Activated T-helper 1 cell treated with anti-CD3 and anti-CD28 coated beads, Interleukin-12 subunit alpha, Interleukin-12 subunit beta, Interleukin-2, Interleukin-4 antibody, amounts not matched to agents 30 ng/mL and 10 ng/mL and 1 ng/mL, durations not matched to agents 14 hours and 24 hours and 36 hours (primary cell): ENCODE measurements at regions of chr11 and their contacts with region 1.

Region 1: GRCh38 chr11:96242971-96243647 is 99.9 kb downstream of the MAML2 start:
- DNase-seq: peak; percentile 78
- H3K4me3 Mint-ChIP-seq: peak overlapping the region; percentile 79
- H3K27ac Mint-ChIP-seq: peak overlapping the region; percentile 94
- H3K4me1 Mint-ChIP-seq: peaks cover 46% of the 10 kb centered on the region
- H3K27me3 Mint-ChIP-seq: no peaks in the 10 kb centered on the region

Region 2: GRCh38 chr11:95835768-95836488 is 407.2 kb before region 1 on chr11:
- intact Hi-C with region 1: loop called (anchors 10 kb)
- DNase-seq: peak; percentile 29
- H3K4me3 Mint-ChIP-seq: no peak overlapping the region
- H3K27ac Mint-ChIP-seq: peak overlapping the region; percentile 0
- H3K4me1 Mint-ChIP-seq: no peaks in the 10 kb centered on the region
- H3K27me3 Mint-ChIP-seq: no peaks in the 10 kb centered on the region

Region 3: DNA sequence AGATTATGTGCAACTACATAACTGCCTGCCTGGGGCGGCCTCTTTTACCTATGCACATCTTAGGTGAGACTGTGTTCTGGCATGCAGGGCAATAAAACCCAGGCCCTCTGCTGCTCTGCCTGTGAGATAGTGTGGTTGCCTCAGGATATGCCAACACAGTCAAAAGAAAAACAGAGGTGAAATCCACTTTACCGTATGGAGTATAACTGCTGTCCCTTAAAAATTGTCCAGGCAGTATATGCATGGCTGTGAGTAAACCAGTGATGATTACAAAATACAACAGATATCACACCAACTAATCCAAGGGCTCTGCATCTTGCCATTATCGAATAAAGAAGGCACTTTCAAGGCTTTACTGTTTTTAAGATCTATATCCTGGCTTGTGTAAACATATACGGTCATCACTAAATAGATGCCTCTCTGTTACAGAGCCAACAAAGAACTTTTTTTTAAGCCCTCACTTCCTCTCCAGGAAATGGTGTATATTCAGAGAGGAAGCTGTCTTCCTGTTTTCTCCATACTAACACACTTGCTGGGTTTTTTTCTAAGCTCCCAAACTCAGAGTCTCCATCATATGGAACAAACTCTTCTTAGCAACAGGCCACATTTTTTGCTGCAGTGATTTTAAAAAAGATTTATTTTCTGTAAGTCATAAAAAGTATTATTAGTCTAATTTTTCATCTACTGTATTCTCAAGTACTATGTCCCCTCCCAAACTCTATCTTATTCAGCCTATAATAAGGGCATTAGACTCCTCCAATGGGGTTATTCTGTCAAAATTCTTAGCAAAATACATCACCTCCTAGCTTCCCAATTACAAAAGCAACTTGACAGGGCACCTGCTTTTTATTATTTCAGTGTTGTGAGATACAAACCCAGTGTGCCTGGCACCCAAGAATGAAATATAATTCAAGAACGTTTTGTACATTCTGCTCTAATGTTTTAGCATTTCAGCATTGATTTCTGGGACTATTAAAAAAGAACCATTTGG is 35.4 kb before region 1 on chr11:
- intact Hi-C with region 1: loop called (anchors 1 kb)
- DNase-seq: no peak
- H3K4me3 Mint-ChIP-seq: peak overlapping the region; percentile 72
- H3K27ac Mint-ChIP-seq: peak overlapping the region; percentile 95
- H3K4me1 Mint-ChIP-seq: peaks cover 83% of the 10 kb centered on the region
- H3K27me3 Mint-ChIP-seq: no peaks in the 10 kb centered on the region

Region 4: DNA sequence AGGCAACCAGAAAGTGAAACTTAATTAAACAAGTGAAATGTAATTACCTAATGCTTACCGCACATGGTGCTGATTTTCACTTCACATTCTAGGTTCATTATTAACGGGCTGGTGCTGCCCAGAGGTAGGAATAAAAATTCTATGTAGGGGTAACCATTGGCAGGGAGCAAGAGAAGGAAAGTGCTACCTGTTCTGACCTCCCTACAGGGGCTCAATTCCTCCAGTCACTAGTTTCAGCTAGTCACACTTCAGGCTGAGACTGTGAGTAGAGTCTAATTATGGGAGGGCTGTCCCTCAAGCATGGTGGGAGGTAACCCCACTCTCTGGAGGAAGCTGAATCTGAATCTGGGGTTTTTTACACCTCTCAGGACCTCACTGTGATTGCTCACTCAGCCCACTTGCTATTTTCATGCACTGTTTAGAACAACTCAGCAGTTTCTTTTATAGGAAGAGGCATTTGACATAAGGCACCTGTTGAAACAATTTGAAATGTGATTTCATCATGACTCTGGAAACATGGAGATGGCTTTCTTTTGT is 24.5 kb after region 1 on chr11:
- intact Hi-C with region 1: loop called (anchors 1 kb)
- DNase-seq: no peak
- H3K4me3 Mint-ChIP-seq: peak overlapping the region; percentile 43
- H3K27ac Mint-ChIP-seq: peak overlapping the region; percentile 57
- H3K4me1 Mint-ChIP-seq: peaks cover 78% of the 10 kb centered on the region
- H3K27me3 Mint-ChIP-seq: no peaks in the 10 kb centered on the region

Region 5: GRCh38 chr11:96284917-96285316 is 41.8 kb after region 1 on chr11:
- intact Hi-C with region 1: no loop called
- DNase-seq: no peak
- H3K4me3 Mint-ChIP-seq: no peak overlapping the region
- H3K27ac Mint-ChIP-seq: no peak overlapping the region
- H3K4me1 Mint-ChIP-seq: peaks cover 50% of the 10 kb centered on the region
- H3K27me3 Mint-ChIP-seq: no peaks in the 10 kb centered on the region

Region 6: DNA sequence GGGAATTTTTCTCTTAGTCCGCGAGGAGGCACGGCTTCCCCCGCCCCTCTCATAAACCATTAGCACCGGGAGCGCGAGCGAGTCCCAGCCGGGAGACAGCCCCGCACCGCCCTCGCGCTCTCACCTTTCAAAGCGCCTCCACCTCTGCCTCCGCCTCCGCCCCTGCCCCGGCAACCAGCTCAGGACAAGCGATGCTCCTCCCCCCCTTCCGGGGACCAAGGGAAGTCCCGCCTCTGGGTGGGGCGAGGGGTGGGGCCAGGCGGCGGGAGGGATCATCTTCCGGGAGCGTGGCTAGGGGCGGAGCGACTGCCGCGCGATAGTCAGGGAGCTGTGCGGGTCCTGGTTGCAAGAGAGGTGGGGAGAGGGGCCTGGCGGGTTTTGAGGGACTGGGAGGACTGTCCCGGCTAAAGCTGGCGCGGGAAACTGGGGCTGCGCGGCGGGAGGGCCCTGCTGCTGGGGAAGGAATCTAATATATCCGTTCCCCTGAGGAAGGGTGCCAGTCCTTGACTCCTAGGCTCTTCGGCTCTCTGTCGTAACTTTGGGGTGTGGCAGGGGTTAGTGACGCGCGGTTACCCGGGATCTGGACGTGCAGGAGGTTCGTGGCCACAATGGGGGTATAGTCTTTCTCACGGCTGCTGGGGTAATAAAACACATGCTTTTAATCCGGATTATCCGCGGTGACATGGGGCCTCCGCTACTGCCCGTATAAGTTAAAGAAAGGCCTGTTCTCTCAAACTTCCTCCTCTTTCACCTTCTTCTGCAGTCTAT is 146.8 kb after region 1 on chr11 and contains the starts of genes CCDC82 and JRKL:
- intact Hi-C with region 1: loop called (anchors 1 kb)
- DNase-seq: peak; percentile 97
- H3K4me3 Mint-ChIP-seq: peak within 1 kb of the TSS; percentile 95
- H3K27ac Mint-ChIP-seq: peak within 1 kb of the TSS; percentile 85
- H3K4me1 Mint-ChIP-seq: peaks cover 64% of the 10 kb centered on the region
- H3K27me3 Mint-ChIP-seq: no peaks in the 10 kb centered on the region
- total RNA-seq, gene CCDC82: 28.5 and 29.9 TPM in 2 replicates
- total RNA-seq, gene JRKL: 9.6 and 10.2 TPM in 2 replicates